AG04450 (cell line): ENCODE measurements at regions of chr5 and their contacts with region 1.

Region 1: GRCh38 chr5:113153512-113154097 is 177.0 kb downstream of the DCP2 start:
- DNase-seq: no peak
- H3K4me3 ChIP-seq: no peak overlapping the region
- H3K27ac ChIP-seq: no peak overlapping the region
- H3K27me3 ChIP-seq: peaks cover 3% of the 10 kb centered on the region
- CTCF ChIP-seq: no peak

Region 2: GRCh38 chr5:113172231-113172826 is 18.7 kb after region 1 on chr5:
- CTCF ChIA-PET with region 1: no interaction called
- POLR2A ChIA-PET with region 1: no interaction called
- DNase-seq: no peak
- H3K4me3 ChIP-seq: no peak overlapping the region
- H3K27ac ChIP-seq: no peak overlapping the region
- H3K27me3 ChIP-seq: no peaks in the 10 kb centered on the region
- CTCF ChIP-seq: no peak

Region 3: GRCh38 chr5:113204525-113205161 is 51.0 kb after region 1 on chr5:
- CTCF ChIA-PET with region 1: interaction called, 10 read pairs
- POLR2A ChIA-PET with region 1: no interaction called
- DNase-seq: no peak
- H3K4me3 ChIP-seq: no peak overlapping the region
- H3K27ac ChIP-seq: no peak overlapping the region
- H3K27me3 ChIP-seq: no peaks in the 10 kb centered on the region
- CTCF ChIP-seq: no peak